Activated CD8-positive, alpha-beta T cell treated with anti-CD3 and anti-CD28 coated beads for 36 hours (primary cell): ENCODE measurements at regions of chr11 and their contacts with region 1.

Region 1: GRCh38 chr11:88779577-88779976 is 286.2 kb downstream of the GRM5 start:
- DNase-seq: no peak
- ATAC-seq: no peak
- H3K4me3 Mint-ChIP-seq: no peak overlapping the region
- H3K27ac Mint-ChIP-seq: no peak overlapping the region
- H3K4me1 Mint-ChIP-seq: peaks cover 3% of the 10 kb centered on the region
- H3K27me3 Mint-ChIP-seq: no peaks in the 10 kb centered on the region
- CTCF ChIP-seq: no peak

Region 2: DNA sequence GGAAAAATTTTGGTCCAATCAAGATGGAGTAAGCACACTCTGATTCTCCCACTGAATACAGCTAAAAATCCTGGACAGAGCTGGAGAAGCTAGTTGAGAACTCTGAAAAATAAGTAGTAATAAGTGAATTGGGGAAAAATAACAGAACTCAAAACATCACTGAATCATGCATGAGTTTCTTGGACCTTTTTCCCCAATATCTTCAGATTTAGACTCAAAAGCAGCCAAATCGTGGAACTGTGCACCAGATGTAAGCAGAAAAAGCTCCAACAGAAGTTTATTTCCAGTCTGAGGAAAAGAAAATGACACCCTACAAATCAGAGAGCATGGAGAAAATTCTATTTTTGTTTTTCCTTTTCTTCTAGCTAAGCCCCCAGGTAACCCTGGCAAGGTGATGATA is 162.4 kb before region 1 on chr11:
- CTCF ChIA-PET with region 1: no interaction called
- POLR2A ChIA-PET with region 1: no interaction called
- intact Hi-C with region 1: no loop called
- DNase-seq: no peak
- ATAC-seq: no peak
- H3K4me3 Mint-ChIP-seq: no peak overlapping the region
- H3K27ac Mint-ChIP-seq: no peak overlapping the region
- H3K4me1 Mint-ChIP-seq: no peaks in the 10 kb centered on the region
- H3K27me3 Mint-ChIP-seq: no peaks in the 10 kb centered on the region
- CTCF ChIP-seq: no peak

Region 3: DNA sequence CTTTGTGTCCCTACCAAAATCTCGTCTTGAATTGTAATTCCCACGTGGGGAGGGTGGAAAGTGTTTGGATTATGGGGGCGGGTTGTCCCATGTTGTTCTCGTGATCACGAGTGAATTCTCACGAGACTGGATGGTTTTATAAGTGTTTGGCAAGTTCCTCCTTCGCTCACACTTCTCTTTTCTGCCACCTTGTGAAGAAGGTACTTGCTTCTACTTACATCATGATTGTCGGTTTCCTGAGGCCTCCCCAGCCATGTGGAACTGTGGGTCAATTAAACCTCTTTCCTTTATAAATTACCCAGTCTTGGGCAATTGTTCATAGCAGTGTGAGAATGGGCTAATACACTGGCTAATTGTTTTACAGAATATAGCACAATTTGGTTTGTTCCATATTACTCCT is 40.1 kb before region 1 on chr11:
- CTCF ChIA-PET with region 1: no interaction called
- POLR2A ChIA-PET with region 1: no interaction called
- intact Hi-C with region 1: loop called (anchors 5 kb)
- DNase-seq: no peak
- ATAC-seq: no peak
- H3K4me3 Mint-ChIP-seq: no peak overlapping the region
- H3K27ac Mint-ChIP-seq: no peak overlapping the region
- H3K4me1 Mint-ChIP-seq: no peaks in the 10 kb centered on the region
- H3K27me3 Mint-ChIP-seq: no peaks in the 10 kb centered on the region
- CTCF ChIP-seq: no peak